Heart left ventricle (tissue), 16 donors: ENCODE measurements at regions of chr1 and their contacts with region 1.

Region 1: GRCh38 chr1:237864338-237865244 is 26.1 kb downstream of the ZP4 start:
- DNase-seq: peak; percentile 55 to 84 (median 75)
- ATAC-seq: peak; percentile 77 to 92 (median 90)
- H3K4me3 ChIP-seq: peak overlapping the region in 1 of 12 donors; percentile 13
- H3K27ac ChIP-seq: no peak overlapping the region
- H3K4me1 ChIP-seq: peaks cover 0 to 11% (median 0%) of the 10 kb centered on the region in 12 donors
- H3K27me3 ChIP-seq: no peaks in the 10 kb centered on the region
- CTCF ChIP-seq: peak; percentile 76 to 89 (median 81)
- POLR2A ChIP-seq: no peak

Region 2: DNA sequence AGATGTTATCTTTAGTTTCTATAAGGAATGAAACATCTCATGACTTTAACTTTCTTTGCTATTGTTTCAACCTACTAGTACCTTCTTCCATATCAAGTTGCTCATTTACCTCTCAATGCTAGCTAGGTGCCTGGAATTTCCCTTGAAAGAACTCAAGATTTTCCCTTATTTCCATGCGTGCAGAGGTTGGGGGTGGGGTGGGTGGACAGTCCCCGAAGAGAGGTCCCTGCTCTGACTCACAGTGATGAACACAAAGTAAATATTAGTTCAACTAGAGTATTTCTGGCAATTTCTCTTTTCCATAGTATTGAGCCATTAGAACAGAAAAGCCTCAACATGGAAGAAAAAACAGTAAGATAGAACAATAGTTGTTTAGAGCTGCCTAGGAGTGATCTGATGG is 265.1 kb after region 1 on chr1:
- intact Hi-C with region 1: no loop called
- DNase-seq: no peak
- ATAC-seq: no peak
- H3K4me3 ChIP-seq: no peak overlapping the region
- H3K27ac ChIP-seq: no peak overlapping the region
- H3K4me1 ChIP-seq: no peaks in the 10 kb centered on the region
- H3K27me3 ChIP-seq: no peaks in the 10 kb centered on the region
- CTCF ChIP-seq: no peak
- POLR2A ChIP-seq: no peak

Region 3: DNA sequence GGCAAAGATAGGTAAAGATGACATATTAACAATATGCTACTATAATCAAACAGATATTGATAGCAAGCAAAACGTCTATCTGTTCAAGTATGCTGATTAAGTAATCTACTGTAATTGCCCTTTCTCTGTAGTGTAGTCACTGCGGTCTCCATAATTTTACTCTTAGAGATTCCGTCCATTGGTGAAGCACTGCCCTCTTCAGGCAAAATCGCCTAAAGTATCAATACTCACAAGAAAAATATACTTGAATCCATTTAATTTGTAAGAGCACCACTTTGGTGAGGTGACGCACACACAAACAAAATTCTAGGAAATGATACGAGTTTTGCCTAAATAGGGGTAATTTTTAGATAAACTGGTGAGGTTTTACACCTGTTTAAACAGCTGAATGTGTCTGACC is 1087.2 kb after region 1 on chr1:
- intact Hi-C with region 1: loop called in 1 of 10 experiments (anchors 10 kb)
- DNase-seq: no peak
- ATAC-seq: no peak
- H3K4me3 ChIP-seq: no peak overlapping the region
- H3K27ac ChIP-seq: no peak overlapping the region
- H3K4me1 ChIP-seq: no peaks in the 10 kb centered on the region
- H3K27me3 ChIP-seq: no peaks in the 10 kb centered on the region
- CTCF ChIP-seq: peak in 4 of 12 donors; percentile 15 to 37 (median 28)
- POLR2A ChIP-seq: no peak